HCT116 (cell line): ENCODE measurements at regions of chr19 and their contacts with region 1.

Region 1: DNA sequence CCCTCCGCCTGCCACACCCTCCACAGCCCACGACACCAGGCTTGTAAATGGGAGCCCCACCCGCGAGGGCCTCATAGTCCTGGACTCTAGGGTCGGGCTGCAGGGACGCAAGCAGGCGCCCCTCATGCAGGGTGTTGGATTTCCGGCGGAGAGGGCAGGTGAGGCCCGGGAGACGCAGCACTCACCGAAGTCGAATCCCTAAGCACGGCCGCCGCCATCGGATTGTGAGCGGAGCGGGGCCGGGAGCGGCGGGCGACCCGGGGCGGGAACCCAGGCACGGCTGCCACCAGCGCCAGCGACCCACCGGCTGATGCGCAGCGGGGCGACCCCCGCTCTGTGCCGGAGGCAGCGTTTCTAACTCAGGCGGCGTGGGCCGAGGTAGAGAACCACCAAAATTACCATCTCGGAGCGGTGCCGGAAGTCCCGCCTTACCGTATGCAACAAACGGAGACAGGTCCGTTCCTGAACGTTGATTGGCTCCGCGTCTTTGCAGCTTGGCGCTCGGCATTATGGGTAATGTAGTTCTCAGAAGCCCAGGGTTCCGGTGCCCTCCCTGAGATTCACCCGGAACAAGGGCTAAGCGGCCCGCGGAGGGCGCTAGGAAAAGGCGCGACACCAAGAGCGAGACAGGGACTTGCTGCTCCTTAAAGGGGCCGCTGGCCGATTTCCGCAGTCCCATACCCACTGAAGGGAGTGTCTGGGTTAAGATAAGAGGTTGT is at the start of gene ZNF416:
- DNase-seq: peak; percentile 99
- ATAC-seq: peak; percentile 95
- H3K4me3 ChIP-seq: peak within 1 kb of the TSS; percentile 74 to 78
- H3K27ac ChIP-seq: peak within 1 kb of the TSS; percentile 68
- H3K4me1 ChIP-seq: peaks cover 2 to 18% of the 10 kb centered on the region in 2 experiments; a peak in 3 of 4 replicates
- H3K27me3 ChIP-seq: no peaks in the 10 kb centered on the region
- CTCF ChIP-seq: 0 out of 6 replicates have a peak, but pooled peaks of 2 of the 3 experiments have one; percentile 9 to 12
- POLR2A ChIP-seq: no peak
- RAD21 ChIP-seq: 0 out of 2 replicates have a peak, but pooled peaks have one; percentile 31
- total RNA-seq, gene ZNF416: 4.0 TPM

Region 2: GRCh38 chr19:57410877-57411671 is 167.6 kb before region 1 on chr19 and contains the start of gene ZNF17:
- CTCF ChIA-PET with region 1: no interaction called
- POLR2A ChIA-PET with region 1: no interaction called
- RAD21 ChIA-PET with region 1: no interaction called
- intact Hi-C with region 1: loop called (anchors 1 kb)
- DNase-seq: peak; percentile 87
- ATAC-seq: peak; percentile 99
- H3K4me3 ChIP-seq: peak within 1 kb of the TSS; percentile 75 to 100
- H3K27ac ChIP-seq: peak within 1 kb of the TSS; percentile 35
- H3K4me1 ChIP-seq: peaks cover 4 to 11% of the 10 kb centered on the region in 2 experiments; a peak in 2 of 4 replicates
- H3K27me3 ChIP-seq: no peaks in the 10 kb centered on the region
- CTCF ChIP-seq: no peak
- POLR2A ChIP-seq: peak; percentile 46
- RAD21 ChIP-seq: no peak
- total RNA-seq, gene ZNF17: 5.1 TPM

Region 3: DNA sequence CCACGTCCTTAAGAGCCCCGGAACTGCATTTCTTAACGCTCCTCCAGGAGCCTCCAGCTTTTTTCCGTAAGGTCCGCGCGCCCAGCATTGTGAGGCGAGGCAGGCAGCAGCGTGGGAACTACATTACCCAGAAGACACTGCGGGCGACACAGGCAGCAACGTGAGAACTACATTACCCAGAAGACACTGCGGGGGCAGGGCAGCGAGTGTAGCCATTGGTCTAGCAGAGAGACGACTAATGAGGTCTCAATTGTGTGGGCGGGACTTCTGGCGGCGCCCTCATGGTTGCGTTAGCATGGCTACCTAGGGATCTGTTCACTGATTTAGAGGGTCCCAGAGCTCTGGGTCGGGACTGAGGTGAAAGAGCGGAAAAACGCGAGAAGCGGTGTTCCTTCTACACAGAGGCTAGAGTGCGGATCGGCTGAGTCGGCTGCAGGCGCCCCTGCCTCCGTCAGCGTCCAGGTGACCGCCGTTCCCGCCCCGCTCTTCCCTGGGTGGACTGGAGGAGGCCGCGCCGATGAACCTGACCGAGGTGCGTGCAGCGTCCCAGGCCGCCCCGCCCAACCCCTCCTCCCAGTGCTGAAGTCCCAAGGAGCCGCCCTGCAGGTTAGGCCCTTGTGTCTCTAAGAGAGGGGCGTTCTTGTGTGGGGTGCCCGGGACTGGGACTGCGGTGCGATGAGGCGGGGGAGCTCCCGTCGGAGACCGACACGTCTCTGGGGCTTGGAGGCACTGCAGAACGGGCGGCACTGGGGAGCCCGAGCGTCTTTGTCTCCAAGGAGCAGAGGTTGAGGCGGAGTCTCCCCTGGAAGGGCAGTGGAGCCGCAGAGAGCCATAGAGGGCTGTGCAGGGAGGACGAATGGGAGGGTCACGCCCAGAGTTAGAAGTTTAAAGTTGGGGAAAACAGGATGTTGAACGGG is 143.3 kb before region 1 on chr19 and contains the start of gene ZNF749:
- CTCF ChIA-PET with region 1: no interaction called
- POLR2A ChIA-PET with region 1: no interaction called
- RAD21 ChIA-PET with region 1: no interaction called
- intact Hi-C with region 1: loop called (anchors 10 kb)
- DNase-seq: peak; percentile 96
- ATAC-seq: peak; percentile 95
- H3K4me3 ChIP-seq: peak within 1 kb of the TSS; percentile 90 to 97
- H3K27ac ChIP-seq: peak within 1 kb of the TSS; percentile 58
- H3K4me1 ChIP-seq: peaks cover 0 to 16% of the 10 kb centered on the region in 2 experiments; a peak in 3 of 4 replicates
- H3K27me3 ChIP-seq: no peaks in the 10 kb centered on the region
- CTCF ChIP-seq: no peak
- POLR2A ChIP-seq: peak; percentile 84
- RAD21 ChIP-seq: no peak
- total RNA-seq, gene ZNF749: 18.0 TPM

Region 4: GRCh38 chr19:57558525-57558924 is 20.1 kb before region 1 on chr19:
- CTCF ChIA-PET with region 1: no interaction called
- POLR2A ChIA-PET with region 1: no interaction called
- RAD21 ChIA-PET with region 1: no interaction called
- intact Hi-C with region 1: no loop called
- DNase-seq: no peak
- ATAC-seq: no peak
- H3K4me3 ChIP-seq: peak overlapping the region; percentile 54 to 55; a peak in 3 of 4 replicates
- H3K27ac ChIP-seq: no peak overlapping the region
- H3K4me1 ChIP-seq: no peaks in the 10 kb centered on the region
- H3K27me3 ChIP-seq: no peaks in the 10 kb centered on the region
- CTCF ChIP-seq: no peak
- POLR2A ChIP-seq: no peak
- RAD21 ChIP-seq: peak; percentile 18; the same call in 1 of the 2 replicates

Region 5: DNA sequence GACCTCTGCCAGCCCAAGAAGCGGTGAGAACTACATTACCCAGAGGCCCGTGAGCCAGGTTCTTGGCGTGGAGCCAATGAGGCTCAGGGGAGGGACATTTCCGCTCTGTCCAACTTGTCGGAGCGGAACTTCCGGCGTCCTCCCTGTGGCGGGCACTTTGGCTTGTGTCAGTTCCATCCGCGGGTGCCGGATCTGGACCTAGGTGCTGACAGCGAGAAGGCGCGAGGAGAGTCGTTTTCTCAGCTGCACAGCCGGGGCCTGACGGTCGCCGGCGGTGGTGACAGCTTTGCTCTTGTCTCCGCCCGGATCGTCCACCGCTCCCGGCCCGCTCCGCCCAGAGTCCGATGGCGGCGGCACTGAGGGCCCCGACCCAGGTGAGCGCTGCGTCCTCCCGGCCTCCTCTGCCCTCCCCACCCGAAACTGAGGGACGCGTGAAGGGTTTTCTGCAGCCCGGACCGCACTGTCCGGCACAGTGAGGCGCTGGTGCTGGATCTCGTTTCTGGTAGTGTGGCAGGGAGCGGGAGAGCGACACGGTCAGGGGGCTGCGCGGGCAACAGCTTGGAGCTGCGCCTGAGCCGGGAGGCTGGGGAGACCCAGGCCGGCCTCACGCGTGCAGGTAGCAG is 21.2 kb after region 1 on chr19 and contains the start of gene ZNF530:
- CTCF ChIA-PET with region 1: no interaction called
- POLR2A ChIA-PET with region 1: no interaction called
- RAD21 ChIA-PET with region 1: no interaction called
- intact Hi-C with region 1: loop called (anchors 1 kb)
- DNase-seq: peak; percentile 88
- ATAC-seq: peak; percentile 97
- H3K4me3 ChIP-seq: peak within 1 kb of the TSS; percentile 73 to 74
- H3K27ac ChIP-seq: no peak within 1 kb of the TSS
- H3K4me1 ChIP-seq: peaks cover 2 to 6% of the 10 kb centered on the region in 2 experiments; a peak in 1 of 4 replicates
- H3K27me3 ChIP-seq: no peaks in the 10 kb centered on the region
- CTCF ChIP-seq: no peak
- POLR2A ChIP-seq: no peak
- RAD21 ChIP-seq: no peak
- total RNA-seq, gene ZNF530: 3.8 TPM

Region 6: DNA sequence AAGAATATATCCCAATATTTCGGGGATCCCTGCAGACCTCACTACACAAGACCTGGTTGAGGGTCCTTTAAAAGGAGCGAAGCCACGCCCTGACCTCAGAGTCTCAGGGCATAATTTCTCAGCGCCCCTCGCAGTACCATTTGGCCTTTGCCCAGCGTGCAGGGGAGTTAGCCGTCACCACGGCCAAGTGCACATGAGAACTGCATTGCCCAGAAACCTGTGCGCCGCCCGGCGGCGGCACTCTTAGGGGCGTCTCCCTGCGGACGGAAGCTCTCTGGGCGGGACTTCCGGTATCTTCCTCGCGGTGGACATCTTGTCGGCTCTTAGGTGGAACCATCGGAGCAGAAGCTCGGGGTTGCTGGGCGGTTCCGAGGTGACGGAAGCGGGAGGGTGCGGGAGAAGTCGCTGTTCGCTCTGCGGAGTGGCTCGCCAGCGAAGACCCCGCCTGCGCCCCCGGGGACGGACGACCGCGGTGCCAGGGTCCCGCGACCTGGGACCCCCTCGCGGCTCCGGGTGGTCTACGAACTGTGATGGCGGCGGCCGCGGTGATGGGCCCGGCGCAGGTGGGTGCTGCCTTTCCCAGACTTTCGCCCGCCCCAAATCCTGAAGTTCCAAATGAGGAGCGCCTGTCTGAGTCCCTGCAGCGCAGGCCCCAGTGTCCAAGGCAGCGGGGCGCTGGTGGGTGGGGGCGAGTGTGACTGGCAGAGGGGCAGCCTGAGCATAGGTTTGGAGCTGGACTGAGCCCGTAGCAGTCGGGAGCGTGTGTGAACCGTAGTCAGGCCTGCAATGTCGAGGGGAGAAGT is 35.5 kb after region 1 on chr19 and contains the start of gene ZNF134:
- CTCF ChIA-PET with region 1: no interaction called
- POLR2A ChIA-PET with region 1: no interaction called
- RAD21 ChIA-PET with region 1: no interaction called
- intact Hi-C with region 1: loop called (anchors 1 kb)
- DNase-seq: peak; percentile 86
- ATAC-seq: peak; percentile 97
- H3K4me3 ChIP-seq: peak within 1 kb of the TSS; percentile 80
- H3K27ac ChIP-seq: peak within 1 kb of the TSS; percentile 52
- H3K4me1 ChIP-seq: peaks cover 3 to 12% of the 10 kb centered on the region in 2 experiments; a peak in 3 of 4 replicates
- H3K27me3 ChIP-seq: no peaks in the 10 kb centered on the region
- CTCF ChIP-seq: peak in 1 of 3 experiments; percentile 53; a peak in 2 of 6 replicates
- POLR2A ChIP-seq: no peak
- RAD21 ChIP-seq: no peak
- total RNA-seq, gene ZNF134: 8.4 TPM

Region 7: GRCh38 chr19:57682226-57682766 is 103.7 kb after region 1 on chr19:
- CTCF ChIA-PET with region 1: no interaction called
- POLR2A ChIA-PET with region 1: no interaction called
- RAD21 ChIA-PET with region 1: no interaction called
- intact Hi-C with region 1: loop called (anchors 1 kb)
- DNase-seq: no peak
- ATAC-seq: peak; percentile 37; the same call in 1 of the 2 replicates
- H3K4me3 ChIP-seq: peak overlapping the region; percentile 90 to 97
- H3K27ac ChIP-seq: peak overlapping the region; percentile 69
- H3K4me1 ChIP-seq: peaks cover 0 to 12% of the 10 kb centered on the region in 2 experiments; a peak in 3 of 4 replicates
- H3K27me3 ChIP-seq: no peaks in the 10 kb centered on the region
- CTCF ChIP-seq: no peak
- POLR2A ChIP-seq: no peak
- RAD21 ChIP-seq: no peak

Region 8: GRCh38 chr19:57914531-57914930 is 335.9 kb after region 1 on chr19:
- CTCF ChIA-PET with region 1: no interaction called
- POLR2A ChIA-PET with region 1: no interaction called
- RAD21 ChIA-PET with region 1: no interaction called
- intact Hi-C with region 1: loop called (anchors 2 kb)
- DNase-seq: no peak
- ATAC-seq: no peak
- H3K4me3 ChIP-seq: no peak overlapping the region
- H3K27ac ChIP-seq: no peak overlapping the region
- H3K4me1 ChIP-seq: peaks cover 0 to 6% of the 10 kb centered on the region in 2 experiments; a peak in 1 of 4 replicates
- H3K27me3 ChIP-seq: no peaks in the 10 kb centered on the region
- CTCF ChIP-seq: no peak
- POLR2A ChIP-seq: no peak
- RAD21 ChIP-seq: no peak